Dendritic cell treated with granulocyte-macrophage colony-stimulating factor and Interleukin-4, amounts not matched to agents 40 ng/mL and 50 ng/mL, for 4 days (primary cell): ENCODE measurements at regions of chr19 and their contacts with region 1.

Region 1: DNA sequence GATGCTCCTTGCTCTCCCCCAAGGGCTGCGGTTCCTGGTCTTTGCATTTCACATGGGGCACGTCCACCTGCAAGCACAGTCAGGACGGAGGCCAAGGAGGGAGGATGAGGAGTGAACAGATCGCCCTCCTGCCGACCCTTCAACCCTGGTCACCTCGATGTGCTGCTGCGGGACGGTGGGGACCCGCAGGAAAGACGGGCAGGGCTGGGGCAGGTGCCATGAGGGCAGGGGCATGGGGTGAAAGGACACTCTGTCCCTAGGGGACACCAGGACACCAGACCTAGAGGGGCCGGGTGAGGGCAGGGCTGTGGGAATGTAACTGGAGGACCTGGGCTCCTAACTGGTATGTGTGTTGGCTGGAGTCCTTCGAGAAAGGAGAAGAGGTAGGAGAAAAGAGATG is 822 bp downstream of the SYCE2 start:
- H3K4me3 Mint-ChIP-seq: peak overlapping the region; percentile 38
- H3K27ac Mint-ChIP-seq: peak overlapping the region; percentile 83
- H3K4me1 Mint-ChIP-seq: peaks cover 29% of the 10 kb centered on the region
- H3K27me3 Mint-ChIP-seq: no peaks in the 10 kb centered on the region

Region 2: GRCh38 chr19:12933287-12934072 is 15.2 kb after region 1 on chr19 and contains the start of gene FARSA:
- intact Hi-C with region 1: loop called (anchors 2 kb)
- H3K4me3 Mint-ChIP-seq: peak within 1 kb of the TSS; percentile 96
- H3K27ac Mint-ChIP-seq: peak within 1 kb of the TSS; percentile 93
- H3K4me1 Mint-ChIP-seq: peaks cover 51% of the 10 kb centered on the region
- H3K27me3 Mint-ChIP-seq: no peaks in the 10 kb centered on the region

Region 3: DNA sequence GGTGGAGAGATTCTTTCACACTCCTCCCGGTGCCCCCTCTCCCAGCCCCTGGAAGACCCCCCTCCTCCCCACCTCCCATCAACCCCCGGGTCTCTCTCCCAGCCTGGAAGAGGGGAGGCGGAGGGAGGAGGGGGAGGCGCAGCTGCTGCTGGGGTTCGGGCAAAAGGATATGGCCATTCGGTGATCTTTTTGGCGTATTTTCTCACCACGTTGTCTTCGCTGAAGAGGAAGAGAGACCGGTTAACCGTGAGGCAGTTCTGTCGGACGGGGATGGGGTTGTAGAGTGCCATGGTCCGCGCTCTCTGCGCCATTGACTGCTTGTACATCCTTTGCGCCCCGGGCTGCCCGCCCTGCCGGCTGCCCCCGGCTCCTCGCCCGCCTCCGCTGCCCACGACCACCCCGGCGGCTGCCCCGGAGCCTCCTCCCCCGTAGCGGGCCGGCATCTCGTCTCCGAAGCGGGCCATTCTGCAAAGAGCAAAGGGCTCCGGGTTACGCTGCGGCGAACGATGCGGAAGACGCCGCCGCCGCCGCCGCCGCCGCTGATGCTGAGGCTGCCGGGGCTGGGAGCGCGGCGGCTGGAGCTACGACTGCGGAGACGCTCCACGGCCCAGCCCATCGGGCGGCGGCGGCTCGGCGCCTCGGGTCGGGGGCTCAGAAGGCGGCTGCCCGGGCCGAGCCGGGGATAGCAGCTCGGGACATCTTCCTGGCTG is 587.6 kb after region 1 on chr19:
- intact Hi-C with region 1: no loop called
- H3K4me3 Mint-ChIP-seq: no peak overlapping the region
- H3K27ac Mint-ChIP-seq: no peak overlapping the region
- H3K4me1 Mint-ChIP-seq: no peaks in the 10 kb centered on the region
- H3K27me3 Mint-ChIP-seq: peaks cover 72% of the 10 kb centered on the region